SK-N-SH (cell line): ENCODE measurements at regions of chr17 and their contacts with region 1.

Region 1: GRCh38 chr17:75845049-75845860 is 1.1 kb upstream of the UNC13D start:
- DNase-seq: peak; percentile 93
- H3K4me3 ChIP-seq: no peak overlapping the region
- H3K27ac ChIP-seq: peak overlapping the region in 1 of 2 experiments; percentile 93; a peak in 2 of 4 replicates
- H3K4me1 ChIP-seq: peaks cover 4 to 34% of the 10 kb centered on the region in 2 experiments; a peak in 3 of 4 replicates
- H3K27me3 ChIP-seq: no peaks in the 10 kb centered on the region
- CTCF ChIP-seq: peak; percentile 70
- EP300 ChIP-seq: peak in 1 of 2 experiments; percentile 55; a peak in 1 of 4 replicates
- RAD21 ChIP-seq: peak; percentile 44

Region 2: GRCh38 chr17:75695141-75695829 is 150.0 kb before region 1 on chr17:
- CTCF ChIA-PET with region 1: no interaction called
- POLR2A ChIA-PET with region 1: no interaction called
- DNase-seq: no peak
- H3K4me3 ChIP-seq: no peak overlapping the region
- H3K27ac ChIP-seq: peak overlapping the region; percentile 91 to 99
- H3K4me1 ChIP-seq: peaks cover 52 to 65% of the 10 kb centered on the region in 2 experiments; a peak in 3 of 4 replicates
- H3K27me3 ChIP-seq: no peaks in the 10 kb centered on the region
- CTCF ChIP-seq: no peak
- EP300 ChIP-seq: no peak
- RAD21 ChIP-seq: no peak

Region 3: GRCh38 chr17:75764711-75765421 is 80.4 kb before region 1 on chr17 and contains the start of gene GALK1:
- CTCF ChIA-PET with region 1: interaction called, 20 read pairs
- POLR2A ChIA-PET with region 1: no interaction called
- DNase-seq: peak; percentile 98
- H3K4me3 ChIP-seq: peak within 1 kb of the TSS; percentile 58 to 92
- H3K27ac ChIP-seq: peak within 1 kb of the TSS; percentile 33 to 44; a peak in 3 of 4 replicates
- H3K4me1 ChIP-seq: peaks cover 8 to 19% of the 10 kb centered on the region in 2 experiments; a peak in 2 of 4 replicates
- H3K27me3 ChIP-seq: no peaks in the 10 kb centered on the region
- CTCF ChIP-seq: peak; percentile 38
- EP300 ChIP-seq: no peak
- RAD21 ChIP-seq: peak; percentile 49
- polyA plus RNA-seq, gene GALK1: 36.5 and 39.2 TPM in 2 replicates

Region 4: GRCh38 chr17:75855310-75856081 is 10.2 kb after region 1 on chr17 and contains the start of gene WBP2:
- CTCF ChIA-PET with region 1: interaction called, 326 read pairs
- POLR2A ChIA-PET with region 1: interaction called, 31 read pairs
- DNase-seq: peak; percentile 97
- H3K4me3 ChIP-seq: peak within 1 kb of the TSS; percentile 72 to 83
- H3K27ac ChIP-seq: peak within 1 kb of the TSS; percentile 86 to 88
- H3K4me1 ChIP-seq: peaks cover 12 to 19% of the 10 kb centered on the region in 2 experiments; a peak in 3 of 4 replicates
- H3K27me3 ChIP-seq: no peaks in the 10 kb centered on the region
- CTCF ChIP-seq: peak; percentile 70
- EP300 ChIP-seq: no peak
- RAD21 ChIP-seq: no peak; the same call in none of the 2 replicates
- polyA plus RNA-seq, gene WBP2: 49.7 and 55.8 TPM in 2 replicates

Region 5: GRCh38 chr17:75864448-75864871 is 19.2 kb after region 1 on chr17:
- CTCF ChIA-PET with region 1: interaction called, 60 read pairs
- POLR2A ChIA-PET with region 1: interaction called, 3 read pairs
- DNase-seq: peak; percentile 35
- H3K4me3 ChIP-seq: no peak overlapping the region
- H3K27ac ChIP-seq: no peak overlapping the region
- H3K4me1 ChIP-seq: no peaks in the 10 kb centered on the region; a peak in 1 of 4 replicates
- H3K27me3 ChIP-seq: no peaks in the 10 kb centered on the region
- CTCF ChIP-seq: no peak
- EP300 ChIP-seq: no peak
- RAD21 ChIP-seq: no peak

Region 6: GRCh38 chr17:75877752-75878173 is 32.5 kb after region 1 on chr17:
- CTCF ChIA-PET with region 1: interaction called, 29 read pairs
- POLR2A ChIA-PET with region 1: no interaction called
- DNase-seq: peak; percentile 93
- H3K4me3 ChIP-seq: peak overlapping the region; percentile 34 to 49
- H3K27ac ChIP-seq: peak overlapping the region in 1 of 2 experiments; percentile 87; a peak in 1 of 4 replicates
- H3K4me1 ChIP-seq: peaks cover 27 to 32% of the 10 kb centered on the region in 2 experiments; a peak in 3 of 4 replicates
- H3K27me3 ChIP-seq: no peaks in the 10 kb centered on the region
- CTCF ChIP-seq: peak; percentile 15; the same call in 1 of the 2 replicates
- EP300 ChIP-seq: no peak
- RAD21 ChIP-seq: peak; percentile 34; the same call in 1 of the 2 replicates

Region 7: DNA sequence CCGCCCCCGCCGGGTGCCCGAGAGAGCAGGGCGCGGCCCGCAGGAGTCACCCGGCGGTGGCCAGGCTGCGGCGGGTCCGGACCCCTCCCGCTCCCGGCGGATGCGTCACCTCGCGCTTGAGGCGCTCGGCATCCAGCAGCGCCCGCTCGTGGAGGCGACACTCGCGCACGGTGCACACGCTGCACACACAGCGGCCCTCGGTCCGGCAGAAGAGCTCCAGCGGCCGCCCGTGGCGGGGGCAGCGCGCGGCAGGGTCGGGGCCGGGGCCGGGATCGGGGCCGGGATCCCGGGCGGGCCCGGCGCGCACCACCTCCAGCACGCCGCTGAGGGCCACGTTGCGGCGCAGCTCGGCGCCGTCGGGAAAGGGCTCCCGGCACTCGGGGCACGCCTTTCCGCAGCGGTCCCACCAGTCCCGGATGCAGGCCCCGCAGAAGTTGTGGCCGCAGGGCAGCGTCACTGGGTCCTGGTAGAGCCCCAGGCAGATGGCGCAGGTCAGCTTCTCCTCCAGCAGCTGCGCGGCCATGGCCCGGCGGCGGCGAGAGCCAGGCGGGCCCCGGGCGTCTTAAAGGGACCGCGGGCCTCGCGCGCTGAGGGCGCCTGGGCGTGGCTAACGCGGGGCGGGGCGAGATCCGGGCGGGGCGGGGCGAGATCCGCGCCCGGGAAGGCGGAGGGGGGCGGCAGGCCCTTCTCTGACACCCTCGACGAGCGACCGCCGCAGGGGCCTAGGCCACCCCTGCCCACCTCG is 51.3 kb after region 1 on chr17 and contains the start of gene TRIM65:
- CTCF ChIA-PET with region 1: interaction called, 35 read pairs
- POLR2A ChIA-PET with region 1: interaction called, 3 read pairs
- DNase-seq: peak; percentile 98
- H3K4me3 ChIP-seq: peak within 1 kb of the TSS; percentile 73 to 76
- H3K27ac ChIP-seq: peak within 1 kb of the TSS; percentile 69 to 91
- H3K4me1 ChIP-seq: peaks cover 9 to 13% of the 10 kb centered on the region in 2 experiments; a peak in 3 of 4 replicates
- H3K27me3 ChIP-seq: no peaks in the 10 kb centered on the region
- CTCF ChIP-seq: peak; percentile 43
- EP300 ChIP-seq: no peak
- RAD21 ChIP-seq: peak; percentile 32
- polyA plus RNA-seq, gene TRIM65: 13.1 and 18.1 TPM in 2 replicates